ENCODE measurements at regions of chr17 and their contacts with region 1.

Region 1: GRCh38 chr17:49191917-49192741 is 18.2 kb downstream of the GNGT2 start:
- DNase-seq: peak; percentile 93
- ATAC-seq: peak; percentile 42
- H3K4me3 ChIP-seq: peak overlapping the region; percentile 76 to 95 (median 88)
- H3K4me3 Mint-ChIP-seq: peak overlapping the region; percentile 93
- H3K27ac ChIP-seq: peak overlapping the region; percentile 92 to 95
- H3K27ac Mint-ChIP-seq: peak overlapping the region; percentile 97
- H3K4me1 ChIP-seq: peaks cover 11 to 23% of the 10 kb centered on the region in 2 donors
- H3K4me1 Mint-ChIP-seq: peaks cover 32% of the 10 kb centered on the region
- H3K27me3 ChIP-seq: no peaks in the 10 kb centered on the region
- H3K27me3 Mint-ChIP-seq: no peaks in the 10 kb centered on the region
- CTCF ChIP-seq: peak; percentile 66

Region 2: DNA sequence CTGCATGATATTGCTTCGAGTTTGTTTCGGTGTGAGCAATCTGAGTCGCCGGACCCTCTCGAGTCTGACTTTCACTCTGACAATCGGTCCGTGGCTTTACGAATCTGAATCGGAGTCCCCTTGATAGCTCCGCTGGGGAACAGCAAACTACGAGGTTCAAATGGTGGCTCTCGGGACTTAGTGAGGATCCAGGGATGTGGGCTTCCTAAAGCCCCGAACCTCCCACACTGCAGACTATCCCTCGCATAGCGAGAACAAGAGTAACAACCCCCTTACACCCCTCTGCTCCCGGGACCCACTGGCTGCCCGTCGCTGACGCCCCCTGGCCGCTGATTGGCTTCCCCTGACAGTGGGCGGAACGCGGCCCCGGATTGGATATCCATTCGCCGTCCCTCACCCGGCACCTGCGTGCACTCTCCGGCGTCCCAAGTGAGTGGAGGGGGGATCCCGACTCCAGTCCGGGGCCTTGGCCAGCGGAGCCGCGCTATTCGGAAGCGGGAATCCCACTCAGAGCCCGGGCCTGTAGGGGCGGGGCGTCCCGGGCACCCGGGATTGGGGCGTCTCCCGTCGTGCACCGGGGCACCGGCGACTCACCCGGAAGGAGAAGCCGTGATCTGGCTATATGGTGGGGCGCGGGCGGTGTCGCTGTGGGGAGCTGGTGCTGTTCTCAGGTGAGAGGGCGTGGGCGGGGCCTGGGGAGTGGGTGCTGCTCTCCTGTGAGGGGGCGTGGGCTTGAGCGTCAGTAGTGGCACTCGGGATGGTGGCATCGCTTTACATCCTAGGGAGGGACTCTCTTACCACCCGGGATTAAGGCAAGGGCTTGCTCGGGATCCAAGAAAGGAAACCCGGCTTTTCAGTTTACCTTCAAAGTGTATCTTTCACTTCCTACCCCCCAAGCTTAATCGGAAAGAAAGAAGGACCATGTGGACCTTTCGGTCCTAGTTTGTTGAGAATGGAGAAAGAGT is 1084.7 kb before region 1 on chr17 and contains the start of gene SNX11:
- CTCF ChIA-PET with region 1: no interaction called
- POLR2A ChIA-PET with region 1: no interaction called
- intact Hi-C with region 1: loop called (anchors 10 kb)
- DNase-seq: peak; percentile 94
- ATAC-seq: peak; percentile 78
- H3K4me3 ChIP-seq: peak within 1 kb of the TSS; percentile 71 to 96 (median 79)
- H3K4me3 Mint-ChIP-seq: peak within 1 kb of the TSS; percentile 91
- H3K27ac ChIP-seq: peak within 1 kb of the TSS; percentile 88 to 94
- H3K27ac Mint-ChIP-seq: peak within 1 kb of the TSS; percentile 97
- H3K4me1 ChIP-seq: peaks cover 46 to 61% of the 10 kb centered on the region in 2 donors
- H3K4me1 Mint-ChIP-seq: peaks cover 58% of the 10 kb centered on the region
- H3K27me3 ChIP-seq: no peaks in the 10 kb centered on the region
- H3K27me3 Mint-ChIP-seq: no peaks in the 10 kb centered on the region
- CTCF ChIP-seq: no peak
- total RNA-seq, gene SNX11: 42.0 and 47.1 TPM in 2 replicates

Region 3: GRCh38 chr17:48928876-48929811 is 263.0 kb before region 1 on chr17:
- CTCF ChIA-PET with region 1: no interaction called
- POLR2A ChIA-PET with region 1: interaction called, 14 read pairs
- intact Hi-C with region 1: no loop called
- DNase-seq: no peak
- ATAC-seq: no peak
- H3K4me3 ChIP-seq: no peak overlapping the region
- H3K4me3 Mint-ChIP-seq: no peak overlapping the region
- H3K27ac ChIP-seq: no peak overlapping the region
- H3K27ac Mint-ChIP-seq: no peak overlapping the region
- H3K4me1 ChIP-seq: no peaks in the 10 kb centered on the region
- H3K4me1 Mint-ChIP-seq: peaks cover 4% of the 10 kb centered on the region
- H3K27me3 ChIP-seq: no peaks in the 10 kb centered on the region
- H3K27me3 Mint-ChIP-seq: no peaks in the 10 kb centered on the region
- CTCF ChIP-seq: no peak

Region 4: GRCh38 chr17:49210158-49211029 is 18.3 kb after region 1 on chr17 and contains the starts of genes ABI3 and GNGT2:
- CTCF ChIA-PET with region 1: interaction called, 36 read pairs
- POLR2A ChIA-PET with region 1: interaction called, 19 read pairs
- intact Hi-C with region 1: loop called (anchors 1 kb)
- DNase-seq: peak; percentile 86
- ATAC-seq: peak; percentile 92
- H3K4me3 ChIP-seq: peak within 1 kb of the TSS; percentile 31 to 68 (median 60)
- H3K4me3 Mint-ChIP-seq: peak within 1 kb of the TSS; percentile 85
- H3K27ac ChIP-seq: peak within 1 kb of the TSS; percentile 51 to 82
- H3K27ac Mint-ChIP-seq: peak within 1 kb of the TSS; percentile 89
- H3K4me1 ChIP-seq: peaks cover 61 to 71% of the 10 kb centered on the region in 2 donors
- H3K4me1 Mint-ChIP-seq: peaks cover 61% of the 10 kb centered on the region
- H3K27me3 ChIP-seq: no peaks in the 10 kb centered on the region
- H3K27me3 Mint-ChIP-seq: no peaks in the 10 kb centered on the region
- CTCF ChIP-seq: no peak
- total RNA-seq, gene ABI3: 20.7 and 23.3 TPM in 2 replicates
- total RNA-seq, gene GNGT2: 9.3 and 11.1 TPM in 2 replicates

Region 5: GRCh38 chr17:49223517-49224197 is 31.5 kb after region 1 on chr17:
- CTCF ChIA-PET with region 1: interaction called, 332 read pairs
- POLR2A ChIA-PET with region 1: interaction called, 45 read pairs
- intact Hi-C with region 1: loop called (anchors 1 kb)
- DNase-seq: peak; percentile 72
- ATAC-seq: peak; percentile 28
- H3K4me3 ChIP-seq: peak overlapping the region in 4 of 5 experiments; percentile 31 to 56 (median 42)
- H3K4me3 Mint-ChIP-seq: peak overlapping the region; percentile 87
- H3K27ac ChIP-seq: no peak overlapping the region
- H3K27ac Mint-ChIP-seq: peak overlapping the region; percentile 62
- H3K4me1 ChIP-seq: peaks cover 50 to 58% of the 10 kb centered on the region in 2 donors
- H3K4me1 Mint-ChIP-seq: peaks cover 49% of the 10 kb centered on the region
- H3K27me3 ChIP-seq: peaks cover 0 to 16% (median 7%) of the 10 kb centered on the region in 4 experiments
- H3K27me3 Mint-ChIP-seq: peaks cover 4% of the 10 kb centered on the region
- CTCF ChIP-seq: peak; percentile 90

Region 6: GRCh38 chr17:49305926-49306325 is 113.8 kb after region 1 on chr17:
- CTCF ChIA-PET with region 1: no interaction called
- POLR2A ChIA-PET with region 1: no interaction called
- intact Hi-C with region 1: no loop called
- DNase-seq: no peak
- ATAC-seq: no peak
- H3K4me3 ChIP-seq: no peak overlapping the region
- H3K4me3 Mint-ChIP-seq: no peak overlapping the region
- H3K27ac ChIP-seq: no peak overlapping the region
- H3K27ac Mint-ChIP-seq: no peak overlapping the region
- H3K4me1 ChIP-seq: no peaks in the 10 kb centered on the region
- H3K4me1 Mint-ChIP-seq: no peaks in the 10 kb centered on the region
- H3K27me3 ChIP-seq: no peaks in the 10 kb centered on the region
- H3K27me3 Mint-ChIP-seq: no peaks in the 10 kb centered on the region
- CTCF ChIP-seq: no peak